PC-9 (cell line): ENCODE measurements at regions of chrX and their contacts with region 1.

Region 1: GRCh38 chrX:53412446-53412845 is 10.0 kb downstream of the SMC1A start:
- DNase-seq: no peak
- H3K4me3 ChIP-seq: no peak overlapping the region
- H3K27ac ChIP-seq: no peak overlapping the region
- H3K4me1 ChIP-seq: no peaks in the 10 kb centered on the region
- H3K27me3 ChIP-seq: no peaks in the 10 kb centered on the region
- CTCF ChIP-seq: no peak

Region 2: GRCh38 chrX:53395601-53396298 is 16.7 kb before region 1 on chrX:
- CTCF ChIA-PET with region 1: no interaction called
- POLR2A ChIA-PET with region 1: interaction called, 31 read pairs
- intact Hi-C with region 1: no loop called
- DNase-seq: no peak
- H3K4me3 ChIP-seq: no peak overlapping the region
- H3K27ac ChIP-seq: no peak overlapping the region
- H3K4me1 ChIP-seq: no peaks in the 10 kb centered on the region
- H3K27me3 ChIP-seq: no peaks in the 10 kb centered on the region
- CTCF ChIP-seq: no peak

Region 3: GRCh38 chrX:53433651-53434639 is 21.5 kb after region 1 on chrX and contains the start of gene HSD17B10:
- CTCF ChIA-PET with region 1: no interaction called
- POLR2A ChIA-PET with region 1: interaction called, 17 read pairs
- intact Hi-C with region 1: no loop called
- DNase-seq: peak; percentile 65 to 93
- H3K4me3 ChIP-seq: peak within 1 kb of the TSS; percentile 59
- H3K27ac ChIP-seq: no peak within 1 kb of the TSS
- H3K4me1 ChIP-seq: no peaks in the 10 kb centered on the region
- H3K27me3 ChIP-seq: no peaks in the 10 kb centered on the region
- CTCF ChIP-seq: no peak
- total RNA-seq, gene HSD17B10: 204 and 234 TPM in 2 replicates

Region 4: DNA sequence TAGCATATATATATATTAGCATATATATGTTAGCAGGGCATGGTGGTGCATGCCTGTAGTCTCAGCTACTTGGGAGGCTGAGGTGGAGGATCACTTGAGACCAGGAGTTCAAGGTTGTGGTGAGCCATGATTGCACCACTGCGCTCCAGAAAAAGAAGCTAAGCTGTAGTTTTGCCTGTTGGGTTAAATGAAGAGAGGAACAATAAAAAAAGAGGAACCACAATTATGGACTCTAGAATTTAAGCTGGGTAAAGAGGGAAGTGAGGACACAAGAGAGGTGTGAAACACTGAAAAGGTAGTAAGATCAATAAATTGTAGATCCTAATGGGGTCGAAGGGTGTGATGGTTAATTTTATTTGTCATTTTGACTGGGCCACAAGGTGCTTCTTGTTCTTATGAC is 62.3 kb after region 1 on chrX:
- CTCF ChIA-PET with region 1: no interaction called
- POLR2A ChIA-PET with region 1: interaction called, 18 read pairs
- intact Hi-C with region 1: no loop called
- DNase-seq: no peak
- H3K4me3 ChIP-seq: no peak overlapping the region
- H3K27ac ChIP-seq: no peak overlapping the region
- H3K4me1 ChIP-seq: no peaks in the 10 kb centered on the region
- H3K27me3 ChIP-seq: no peaks in the 10 kb centered on the region
- CTCF ChIP-seq: no peak

Region 5: GRCh38 chrX:53556868-53557267 is 144.4 kb after region 1 on chrX:
- CTCF ChIA-PET with region 1: no interaction called
- POLR2A ChIA-PET with region 1: no interaction called
- intact Hi-C with region 1: no loop called
- DNase-seq: no peak
- H3K4me3 ChIP-seq: no peak overlapping the region
- H3K27ac ChIP-seq: no peak overlapping the region
- H3K4me1 ChIP-seq: no peaks in the 10 kb centered on the region
- H3K27me3 ChIP-seq: no peaks in the 10 kb centered on the region
- CTCF ChIP-seq: no peak

Region 6: DNA sequence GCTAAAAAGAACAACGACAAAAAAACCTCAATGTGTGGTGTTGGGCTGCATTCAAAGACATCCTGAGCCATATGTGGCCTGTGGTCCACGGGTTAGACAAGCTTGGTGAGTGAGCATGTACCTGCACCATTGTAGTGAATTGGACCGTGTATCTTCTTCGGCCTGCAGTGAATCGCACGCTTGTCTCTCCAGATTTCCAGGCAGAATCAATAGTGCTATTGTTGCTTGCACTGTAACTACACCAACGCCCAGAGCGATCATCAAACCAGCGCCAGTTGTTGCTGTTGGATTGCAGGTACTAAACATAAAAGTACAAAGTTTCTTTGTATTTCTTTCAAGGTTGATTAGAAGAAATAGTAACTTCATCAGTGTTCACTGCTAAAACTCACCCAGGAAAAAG is 172.4 kb after region 1 on chrX:
- CTCF ChIA-PET with region 1: no interaction called
- POLR2A ChIA-PET with region 1: no interaction called
- intact Hi-C with region 1: no loop called
- DNase-seq: no peak
- H3K4me3 ChIP-seq: no peak overlapping the region
- H3K27ac ChIP-seq: no peak overlapping the region
- H3K4me1 ChIP-seq: no peaks in the 10 kb centered on the region
- H3K27me3 ChIP-seq: no peaks in the 10 kb centered on the region
- CTCF ChIP-seq: no peak